Heart left ventricle (tissue), 16 donors: ENCODE measurements at regions of chr21 and their contacts with region 1.

Region 1: GRCh38 chr21:44892536-44893277 is 19.2 kb upstream of the PTTG1IP start:
- DNase-seq: peak in 4 of 5 donors; percentile 63 to 87 (median 68)
- ATAC-seq: peak in 3 of 4 donors; percentile 58 to 79 (median 73)
- H3K4me3 ChIP-seq: no peak overlapping the region
- H3K27ac ChIP-seq: no peak overlapping the region
- H3K4me1 ChIP-seq: peaks cover 0 to 9% (median 0%) of the 10 kb centered on the region in 12 donors
- H3K27me3 ChIP-seq: no peaks in the 10 kb centered on the region
- CTCF ChIP-seq: peak; percentile 77 to 88 (median 86)
- POLR2A ChIP-seq: no peak

Region 2: DNA sequence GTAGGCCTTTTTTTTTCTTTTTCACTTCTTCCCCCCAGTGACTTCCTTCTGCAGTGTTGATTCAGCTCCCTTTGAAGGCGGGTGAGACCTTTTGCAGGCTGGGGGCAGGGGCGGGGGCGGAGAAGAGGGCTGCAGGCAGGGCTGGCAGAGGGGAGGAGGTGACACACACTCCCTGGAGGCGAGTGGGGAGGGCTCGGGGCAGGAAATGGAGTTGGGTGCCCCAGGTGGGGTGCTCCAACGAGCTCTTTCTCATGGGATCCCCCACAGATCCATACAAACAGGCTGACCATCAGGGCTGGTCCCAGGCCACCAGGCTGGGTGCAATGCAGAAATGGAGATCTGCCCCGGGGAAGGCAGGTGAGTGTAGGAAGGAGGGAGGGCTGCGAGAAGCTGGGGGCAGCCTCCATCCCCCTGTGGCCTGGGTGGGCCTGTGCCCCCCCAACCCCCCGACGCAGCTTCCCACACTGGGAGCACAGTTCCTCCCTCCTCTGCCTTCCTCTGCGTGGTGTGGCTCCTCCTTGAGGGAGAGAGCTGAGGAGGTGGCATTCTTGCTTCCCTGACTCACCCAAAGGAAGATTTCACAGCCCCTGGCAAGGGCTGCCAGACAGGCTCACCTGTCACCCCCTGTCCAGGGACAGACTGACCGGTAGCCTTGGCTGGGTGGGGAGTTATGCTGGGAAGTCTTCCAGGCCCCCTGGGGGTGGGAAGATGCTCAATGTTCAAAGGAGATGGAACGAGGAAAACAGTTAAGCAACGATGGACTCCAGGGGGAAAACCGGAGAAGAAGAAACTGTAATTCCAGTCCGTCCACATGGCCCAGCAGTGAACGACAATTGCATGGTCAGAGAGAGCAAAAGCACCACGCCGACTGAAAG is 35.1 kb after region 1 on chr21:
- intact Hi-C with region 1: loop called (anchors 1 to 5 kb)
- DNase-seq: peak in 4 of 5 donors; percentile 45 to 84 (median 66)
- ATAC-seq: peak in 3 of 4 donors; percentile 15 to 63 (median 52)
- H3K4me3 ChIP-seq: peak overlapping the region in 4 of 12 donors; percentile 10 to 57 (median 29)
- H3K27ac ChIP-seq: peak overlapping the region in 3 of 12 donors; percentile 44 to 93 (median 56)
- H3K4me1 ChIP-seq: peaks cover 0 to 91% (median 22%) of the 10 kb centered on the region in 12 donors
- H3K27me3 ChIP-seq: peaks cover 2 to 37% (median 20%) of the 10 kb centered on the region in 9 donors
- CTCF ChIP-seq: no peak
- POLR2A ChIP-seq: no peak

Region 3: DNA sequence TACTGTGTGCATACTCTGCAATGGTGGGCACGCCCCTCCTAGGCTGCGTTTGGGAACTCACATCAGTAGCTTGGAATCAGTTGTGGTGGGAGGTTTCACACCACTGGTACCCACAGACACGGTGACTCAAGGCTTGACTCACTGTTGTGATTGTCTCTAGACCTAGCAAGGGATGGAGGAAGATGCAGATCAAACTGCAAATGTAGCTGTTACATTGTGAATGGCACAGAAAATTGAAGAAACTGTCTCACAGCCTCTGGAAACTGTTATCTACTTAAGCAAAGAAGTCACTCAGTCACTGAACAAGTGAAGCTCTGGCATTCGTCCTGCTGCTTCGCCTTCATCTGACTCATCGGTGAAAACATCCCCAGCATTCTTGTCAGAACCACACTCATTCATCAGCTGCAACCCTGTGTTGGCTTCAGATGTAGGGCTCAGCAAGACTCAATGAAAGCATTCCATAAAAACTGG is 335.5 kb after region 1 on chr21:
- intact Hi-C with region 1: no loop called
- DNase-seq: no peak
- ATAC-seq: peak in 2 of 4 donors; percentile 56
- H3K4me3 ChIP-seq: no peak overlapping the region
- H3K27ac ChIP-seq: peak overlapping the region in 1 of 12 donors; percentile 7
- H3K4me1 ChIP-seq: peaks cover 0 to 5% (median 0%) of the 10 kb centered on the region in 12 donors
- H3K27me3 ChIP-seq: peaks cover 0 to 8% (median 0%) of the 10 kb centered on the region in 9 donors
- CTCF ChIP-seq: no peak
- POLR2A ChIP-seq: no peak